KBM-7 (cell line): ENCODE measurements at regions of chrX and their contacts with region 1.

Region 1: GRCh38 chrX:18931972-18932371 is 51.9 kb downstream of the PHKA2 start:
- DNase-seq: peak; percentile 52

Region 2: GRCh38 chrX:19343535-19344408 is 411.8 kb after region 1 on chrX and contains the start of gene PDHA1:
- in situ Hi-C with region 1: loop called (anchors 25 kb)
- DNase-seq: peak; percentile 98